K562 (cell line): ENCODE measurements at regions of chr2 and their contacts with region 1.

Region 1: DNA sequence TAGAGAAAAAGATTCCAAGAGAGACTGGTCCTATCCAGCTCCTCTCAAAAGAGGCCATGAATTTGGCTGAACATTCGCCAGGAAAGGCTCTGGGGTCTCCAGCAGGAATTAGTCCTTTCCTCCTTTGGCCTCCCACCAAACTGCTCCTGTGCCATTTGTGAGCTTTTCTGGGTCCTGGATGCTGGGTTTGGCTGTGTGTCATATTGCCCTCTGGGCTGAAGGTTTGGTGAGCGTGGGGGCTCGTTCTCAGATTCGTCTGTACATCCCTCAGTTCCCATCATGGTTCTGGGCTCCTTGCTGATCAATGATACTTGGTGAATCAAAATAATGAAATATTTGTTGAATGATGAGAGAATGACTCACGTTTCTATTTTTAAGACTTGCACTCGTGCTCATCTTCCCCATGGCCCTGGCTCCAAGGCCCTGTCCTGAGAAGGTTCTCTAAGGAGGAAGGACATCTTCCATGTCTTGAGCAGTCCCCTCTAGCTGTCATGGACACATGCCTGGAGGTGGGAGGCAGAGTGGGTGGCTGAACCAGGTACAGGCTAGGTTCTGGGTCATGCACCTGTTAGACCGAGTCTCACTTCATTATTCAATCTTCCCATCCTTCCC is 47.8 kb upstream of the RHOB start:
- DNase-seq: no peak
- ATAC-seq: no peak
- H3K4me3 ChIP-seq: no peak overlapping the region
- H3K27ac ChIP-seq: no peak overlapping the region
- H3K4me1 ChIP-seq: no peaks in the 10 kb centered on the region
- H3K27me3 ChIP-seq: peaks cover 16 to 44% of the 10 kb centered on the region in 2 experiments
- CTCF ChIP-seq: no peak
- EP300 ChIP-seq: no peak
- POLR2A ChIP-seq: no peak
- RAD21 ChIP-seq: no peak

Region 2: DNA sequence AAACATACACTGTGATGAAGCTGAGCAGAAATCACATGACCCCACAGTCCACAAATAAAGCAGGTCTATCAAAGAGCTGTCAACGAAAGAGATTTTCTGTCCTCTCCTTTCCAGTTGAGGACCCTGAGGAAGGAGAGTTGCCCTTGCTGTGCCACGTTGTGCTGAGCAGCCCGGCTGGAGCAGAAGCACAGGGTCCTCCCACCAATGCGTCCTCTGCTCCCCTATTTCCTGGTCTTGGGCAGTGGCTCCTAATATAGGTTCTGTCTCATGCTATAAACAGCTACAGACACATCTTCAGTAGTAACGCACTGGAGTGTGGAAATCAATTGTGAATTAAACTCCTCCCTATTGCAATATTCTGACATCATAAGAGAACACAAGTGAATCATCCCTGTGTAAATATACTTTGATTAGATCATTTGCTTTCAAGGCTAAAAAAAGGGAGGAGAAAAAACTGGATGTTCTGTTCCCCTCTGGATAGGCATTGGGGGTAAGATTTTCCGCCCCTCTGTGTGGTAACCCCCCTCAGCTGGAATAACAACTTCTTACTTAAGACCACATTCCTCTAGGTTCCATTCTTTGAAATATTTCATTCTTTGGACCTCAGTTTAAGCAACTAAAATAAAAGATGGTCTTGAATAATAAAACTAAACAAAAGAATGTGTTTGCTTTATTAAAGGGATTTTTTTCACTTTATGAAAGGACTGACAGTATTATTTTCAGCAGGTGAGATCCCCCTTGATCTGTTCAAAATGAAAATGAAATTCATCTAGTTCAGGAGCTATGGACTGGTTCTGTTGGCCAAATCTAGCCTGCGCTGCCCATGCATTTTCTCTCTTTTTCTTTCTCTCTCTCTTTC is 39.5 kb after region 1 on chr2:
- CTCF ChIA-PET with region 1: interaction called, 9 read pairs
- POLR2A ChIA-PET with region 1: no interaction called
- in situ Hi-C with region 1: no loop called
- intact Hi-C with region 1: loop called (anchors 5 kb)
- DNase-seq: no peak
- ATAC-seq: no peak
- H3K4me3 ChIP-seq: no peak overlapping the region
- H3K27ac ChIP-seq: no peak overlapping the region
- H3K4me1 ChIP-seq: no peaks in the 10 kb centered on the region; a peak in 3 of 5 replicates
- H3K27me3 ChIP-seq: peaks cover 4 to 11% of the 10 kb centered on the region in 2 experiments; a peak in 2 of 5 replicates
- CTCF ChIP-seq: no peak
- EP300 ChIP-seq: 0 out of 2 replicates have a peak, but pooled peaks have one; percentile 21
- POLR2A ChIP-seq: no peak
- RAD21 ChIP-seq: no peak

Region 3: DNA sequence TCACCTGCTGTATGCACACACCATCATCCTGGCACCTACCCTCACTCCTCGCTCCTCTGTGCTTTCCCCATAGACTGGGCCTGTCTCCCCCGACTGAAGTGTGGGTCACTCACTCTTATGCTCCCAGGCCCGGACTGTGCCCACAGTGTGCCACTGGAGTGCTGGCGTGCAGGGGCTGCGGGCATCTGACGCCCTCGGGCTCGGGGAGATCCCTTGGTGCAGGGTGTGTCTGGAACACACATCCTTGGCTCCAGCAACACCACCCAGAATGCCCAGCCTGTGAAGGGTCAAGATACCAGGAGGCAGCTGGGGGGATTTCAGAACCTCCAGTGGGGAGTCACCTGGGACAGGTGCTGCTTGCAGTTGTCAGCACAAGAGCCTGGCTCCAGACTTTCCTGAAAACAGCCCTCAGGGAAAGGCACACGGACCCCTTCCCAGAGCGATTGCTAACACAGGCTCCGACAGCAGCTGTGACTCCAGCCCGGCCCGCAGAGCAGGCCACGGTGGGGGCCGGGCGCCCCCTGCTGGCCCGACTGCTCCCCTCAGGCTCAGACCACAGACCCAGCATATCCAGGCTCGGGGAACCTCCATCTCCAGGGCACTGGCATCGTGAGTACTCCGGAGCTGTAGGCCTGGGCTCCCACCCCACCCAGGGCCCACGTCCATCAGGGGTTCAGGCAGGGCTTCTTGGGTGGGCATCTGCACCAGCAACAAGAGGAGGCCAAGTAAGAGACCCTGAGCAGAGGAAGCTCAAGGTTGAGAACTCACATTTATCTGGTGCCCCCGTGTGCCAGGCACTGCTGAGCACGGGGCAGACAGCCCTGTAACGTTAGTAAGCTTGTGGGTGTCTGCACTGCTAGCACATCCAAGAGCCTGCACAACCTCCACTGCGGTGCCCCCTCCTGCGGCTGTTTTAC is 243.3 kb after region 1 on chr2:
- CTCF ChIA-PET with region 1: interaction called, 26 read pairs
- POLR2A ChIA-PET with region 1: interaction called, 3 read pairs
- in situ Hi-C with region 1: no loop called
- intact Hi-C with region 1: loop called (anchors 2 kb)
- DNase-seq: peak; percentile 78 to 85 (median 82)
- ATAC-seq: peak; percentile 99
- H3K4me3 ChIP-seq: no peak overlapping the region
- H3K27ac ChIP-seq: no peak overlapping the region
- H3K4me1 ChIP-seq: peaks cover 7 to 16% of the 10 kb centered on the region in 2 experiments; a peak in 4 of 5 replicates
- H3K27me3 ChIP-seq: no peaks in the 10 kb centered on the region
- CTCF ChIP-seq: peak; percentile 84 to 90 (median 89)
- EP300 ChIP-seq: no peak
- POLR2A ChIP-seq: no peak
- RAD21 ChIP-seq: peak; percentile 81 to 90